ENCODE measurements at regions of chr3 and their contacts with region 1.

Region 1: DNA sequence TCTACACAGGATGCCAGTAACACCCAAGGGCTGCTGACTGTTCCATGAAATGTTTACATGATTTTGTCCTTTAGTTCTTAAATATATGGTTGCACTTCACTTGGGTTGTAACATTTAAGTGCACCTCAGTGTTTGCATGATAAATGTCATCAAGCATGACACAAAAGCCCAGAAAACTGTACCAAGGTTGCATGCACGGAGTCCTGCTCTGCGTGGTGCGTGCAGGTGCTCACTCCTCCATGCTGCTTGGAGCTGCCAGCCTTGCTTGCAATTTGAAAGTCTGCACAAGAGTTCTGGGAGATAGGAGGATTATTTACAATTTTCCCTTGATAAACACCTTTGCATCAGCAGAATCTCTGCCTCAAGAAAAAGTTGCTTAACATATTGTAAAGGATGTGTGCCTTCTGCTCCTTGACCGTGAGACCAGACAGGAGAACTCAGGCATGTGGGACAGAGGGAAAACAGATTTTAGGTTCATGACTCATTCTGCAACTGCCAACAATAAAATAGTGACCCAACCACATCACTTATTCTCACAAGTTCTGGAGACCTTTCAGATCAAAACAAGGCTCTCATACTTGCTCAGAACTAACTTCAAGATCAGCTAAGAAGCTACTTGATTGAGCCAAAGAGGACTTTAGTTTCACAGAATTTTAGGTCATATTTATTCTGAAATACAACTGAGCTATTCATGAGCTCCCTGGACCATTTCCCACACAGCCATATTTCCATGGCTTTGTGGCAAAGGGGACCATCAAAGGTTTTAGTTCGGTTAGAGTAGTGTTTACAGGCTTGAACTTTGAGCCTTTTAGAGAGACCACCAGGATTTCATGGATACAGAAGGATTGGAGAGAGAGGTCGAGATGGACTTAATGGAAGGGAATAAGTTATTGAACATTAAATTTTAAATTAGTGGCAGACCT is 128.4 kb upstream of the ZBED2 start:
- DNase-seq: no peak

Region 2: GRCh38 chr3:111803123-111803593 is 79.6 kb after region 1 on chr3:
- intact Hi-C with region 1: loop called (anchors 5 kb)
- DNase-seq: no peak